Ascending aorta (tissue), 2 donors: ENCODE measurements at regions of chr7 and their contacts with region 1.

Region 1: GRCh38 chr7:134879815-134880475 is 100.5 kb downstream of the CALD1 start:
- DNase-seq: no peak
- H3K4me3 ChIP-seq: no peak overlapping the region
- H3K27ac ChIP-seq: peak overlapping the region; percentile 27 to 35
- H3K4me1 ChIP-seq: peaks cover 5 to 50% of the 10 kb centered on the region in 2 donors
- H3K27me3 ChIP-seq: no peaks in the 10 kb centered on the region
- CTCF ChIP-seq: no peak

Region 2: DNA sequence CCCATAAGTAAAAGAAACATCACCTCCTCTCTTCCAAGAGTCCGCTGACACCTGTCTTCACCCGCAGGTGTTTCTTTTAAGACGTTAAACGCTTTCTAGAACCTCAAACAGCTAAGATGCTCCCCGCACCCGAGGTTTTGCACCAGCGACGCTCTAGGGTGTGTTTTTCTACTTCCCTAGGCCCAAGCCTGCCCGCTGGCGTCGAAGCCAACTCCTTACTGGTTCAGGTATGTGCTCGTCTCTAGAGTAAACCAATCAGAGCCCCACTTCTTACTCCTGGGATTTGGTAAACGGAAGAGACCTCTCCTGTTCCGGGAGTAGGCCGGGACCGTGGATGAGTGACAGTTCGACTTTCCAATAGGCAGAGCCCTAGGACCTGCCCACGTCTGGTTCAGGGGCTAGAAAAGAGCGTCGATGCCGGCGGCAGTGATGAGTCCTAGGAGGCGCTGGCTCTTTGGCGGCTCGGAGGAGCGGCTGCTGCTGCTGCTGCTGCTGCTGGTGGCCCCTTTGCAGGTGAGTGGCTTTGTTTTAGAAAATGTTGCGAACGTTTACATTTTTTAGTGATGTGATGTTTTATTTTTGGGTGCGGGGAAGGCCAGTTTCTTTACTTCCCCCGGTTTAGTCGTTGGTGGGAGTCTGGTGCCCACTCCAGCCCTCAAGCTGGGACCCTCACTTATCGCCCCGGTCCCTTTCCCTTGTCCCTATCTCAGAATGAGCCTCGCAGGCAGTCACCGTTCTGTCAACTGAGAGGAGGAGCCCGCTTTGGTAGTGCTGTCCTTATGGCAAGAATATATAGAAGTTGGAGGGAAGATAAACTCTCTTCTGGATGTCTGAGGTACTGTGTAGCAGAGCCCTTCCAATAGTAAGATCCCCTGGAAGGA is 233.3 kb before region 1 on chr7 and contains the start of gene BPGM:
- intact Hi-C with region 1: no loop called
- DNase-seq: peak; percentile 96 to 99
- H3K4me3 ChIP-seq: peak within 1 kb of the TSS; percentile 73 to 81
- H3K27ac ChIP-seq: peak within 1 kb of the TSS; percentile 74 to 84
- H3K4me1 ChIP-seq: peaks cover 2 to 6% of the 10 kb centered on the region in 2 donors
- H3K27me3 ChIP-seq: no peaks in the 10 kb centered on the region
- CTCF ChIP-seq: no peak
- total RNA-seq, gene BPGM: 19.2 TPM

Region 3: DNA sequence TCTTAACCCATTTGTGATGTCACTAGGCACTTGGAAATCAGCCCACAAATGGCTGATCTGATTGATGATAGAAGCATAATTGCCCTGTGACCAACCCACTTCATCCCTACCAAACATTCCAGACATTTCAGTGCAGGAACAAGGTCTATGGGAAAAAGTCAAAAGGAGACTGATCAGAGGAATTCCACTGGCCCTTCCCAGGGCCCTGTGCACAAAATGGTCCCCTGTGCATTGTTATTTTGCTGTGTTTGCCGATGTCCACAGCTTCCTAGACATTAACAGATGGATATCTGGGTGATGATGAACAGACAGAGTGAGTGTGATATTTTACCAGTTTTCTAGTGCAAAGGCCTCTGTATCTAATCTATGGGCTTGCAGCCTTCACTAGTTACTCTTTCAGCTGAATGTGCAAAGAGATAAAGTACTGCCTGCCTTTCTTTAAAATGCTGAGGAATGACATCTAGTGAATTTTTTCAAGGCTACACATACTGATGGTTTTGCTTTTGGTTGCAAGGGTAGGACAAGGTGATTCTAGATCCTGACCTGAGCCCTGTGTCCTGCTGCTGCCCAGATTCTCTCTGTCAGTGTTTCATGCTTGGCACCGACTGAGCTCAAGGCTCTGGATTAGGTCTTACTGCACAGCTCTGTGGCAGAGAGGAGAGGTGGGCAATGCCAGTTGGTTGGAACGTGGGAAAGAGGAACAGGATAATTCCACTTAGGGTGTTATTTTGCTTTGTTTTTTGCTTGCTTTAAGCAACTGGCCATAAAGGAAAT is 45.1 kb before region 1 on chr7:
- intact Hi-C with region 1: loop called (anchors 5 kb)
- DNase-seq: peak in 1 of 2 donors; percentile 69
- H3K4me3 ChIP-seq: no peak overlapping the region
- H3K27ac ChIP-seq: peak overlapping the region; percentile 89
- H3K4me1 ChIP-seq: peaks cover 26 to 70% of the 10 kb centered on the region in 2 donors
- H3K27me3 ChIP-seq: no peaks in the 10 kb centered on the region
- CTCF ChIP-seq: peak in 1 of 3 experiments; percentile 10